ENCODE measurements at regions of chr20 and their contacts with region 1.

Region 1: DNA sequence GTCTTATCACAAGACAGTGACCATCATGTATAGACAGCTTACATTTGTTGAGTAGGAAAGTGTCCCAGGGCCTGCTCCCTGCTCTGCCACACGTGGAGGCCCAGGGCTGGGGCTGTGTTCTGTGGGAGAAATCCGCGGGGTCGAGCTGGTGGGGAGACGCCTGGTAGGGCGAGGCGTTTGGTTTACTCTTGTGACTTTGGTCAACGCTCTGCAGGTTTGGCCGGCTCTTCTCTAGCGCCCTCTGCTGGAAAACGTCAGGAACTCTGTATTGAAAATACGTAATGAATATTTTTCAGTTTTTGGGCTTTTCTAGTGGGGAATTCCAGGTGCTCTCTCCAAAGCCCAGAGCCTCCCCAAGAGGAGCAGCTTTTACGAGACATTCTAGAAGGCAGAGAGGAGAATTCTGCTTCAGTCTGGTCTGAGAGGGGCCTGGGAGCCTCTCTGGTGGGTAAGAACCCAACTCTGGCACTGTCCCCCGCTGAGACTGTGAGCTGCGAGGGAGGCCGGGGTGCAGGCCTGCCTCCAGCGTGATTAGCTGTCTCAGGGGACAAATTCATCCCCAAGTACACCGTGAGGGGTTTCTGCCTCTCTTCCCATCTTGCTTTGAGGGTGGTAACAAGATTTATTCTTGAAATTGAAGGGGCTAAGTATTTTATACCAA is 112.6 kb upstream of the RALGAPA2 start:
- DNase-seq: peak; percentile 49 to 53
- ATAC-seq: peak; percentile 35 to 80; a peak in 3 of 6 replicates
- H3K4me3 ChIP-seq: no peak overlapping the region
- H3K27ac ChIP-seq: no peak overlapping the region
- H3K4me1 ChIP-seq: no peaks in the 10 kb centered on the region
- CTCF ChIP-seq: peak; percentile 76
- EP300 ChIP-seq: no peak
- POLR2A ChIP-seq: no peak
- RAD21 ChIP-seq: peak; percentile 67

Region 2: GRCh38 chr20:20435453-20435852 is 389.6 kb before region 1 on chr20:
- CTCF ChIA-PET with region 1: no interaction called
- POLR2A ChIA-PET with region 1: no interaction called
- DNase-seq: no peak
- ATAC-seq: peak in 1 of 2 experiments; percentile 56; a peak in 2 of 6 replicates
- H3K4me3 ChIP-seq: no peak overlapping the region
- H3K27ac ChIP-seq: no peak overlapping the region
- H3K4me1 ChIP-seq: no peaks in the 10 kb centered on the region
- CTCF ChIP-seq: no peak
- EP300 ChIP-seq: no peak
- POLR2A ChIP-seq: no peak
- RAD21 ChIP-seq: no peak

Region 3: DNA sequence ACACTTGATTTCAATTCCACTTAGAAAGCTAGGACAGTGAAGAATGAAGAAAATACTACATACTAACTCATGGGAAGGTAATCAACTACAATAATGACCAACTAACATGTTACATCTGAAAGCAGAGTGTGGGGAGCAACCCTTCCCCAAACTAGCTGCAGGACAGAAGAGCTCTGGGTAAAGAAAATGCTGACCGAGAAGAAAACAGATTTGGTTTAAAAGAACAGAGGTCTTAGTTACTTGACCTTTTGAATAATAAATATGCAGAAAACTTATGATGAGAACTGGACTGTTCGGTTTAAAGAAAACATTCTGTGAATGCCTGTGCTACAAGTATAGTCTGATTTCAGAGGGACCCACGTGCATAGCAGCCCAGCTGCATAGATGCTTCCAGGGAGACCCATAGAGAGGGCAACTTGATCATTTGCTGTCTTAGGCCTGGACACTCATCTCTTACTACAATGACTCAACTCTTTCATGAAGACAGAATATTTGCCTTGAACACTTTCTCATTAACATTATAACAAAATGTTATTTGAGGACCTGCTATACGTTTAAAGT is 166.1 kb before region 1 on chr20:
- CTCF ChIA-PET with region 1: interaction called, 39 read pairs
- POLR2A ChIA-PET with region 1: no interaction called
- DNase-seq: no peak
- ATAC-seq: no peak
- H3K4me3 ChIP-seq: no peak overlapping the region
- H3K27ac ChIP-seq: no peak overlapping the region
- H3K4me1 ChIP-seq: no peaks in the 10 kb centered on the region
- CTCF ChIP-seq: no peak
- EP300 ChIP-seq: no peak
- POLR2A ChIP-seq: no peak
- RAD21 ChIP-seq: no peak

Region 4: GRCh38 chr20:20791664-20792568 is 33.1 kb before region 1 on chr20:
- CTCF ChIA-PET with region 1: interaction called, 11 read pairs
- POLR2A ChIA-PET with region 1: no interaction called
- DNase-seq: no peak
- ATAC-seq: no peak
- H3K4me3 ChIP-seq: no peak overlapping the region
- H3K27ac ChIP-seq: no peak overlapping the region
- H3K4me1 ChIP-seq: no peaks in the 10 kb centered on the region
- CTCF ChIP-seq: no peak
- EP300 ChIP-seq: no peak
- POLR2A ChIP-seq: no peak
- RAD21 ChIP-seq: no peak

Region 5: GRCh38 chr20:20814685-20815084 is 10.4 kb before region 1 on chr20:
- CTCF ChIA-PET with region 1: interaction called, 19 read pairs
- POLR2A ChIA-PET with region 1: no interaction called
- DNase-seq: peak in 1 of 2 experiments; percentile 12
- ATAC-seq: no peak
- H3K4me3 ChIP-seq: no peak overlapping the region
- H3K27ac ChIP-seq: no peak overlapping the region
- H3K4me1 ChIP-seq: no peaks in the 10 kb centered on the region
- CTCF ChIP-seq: no peak
- EP300 ChIP-seq: no peak
- POLR2A ChIP-seq: no peak
- RAD21 ChIP-seq: no peak

Region 6: GRCh38 chr20:20843982-20844381 is 18.9 kb after region 1 on chr20:
- CTCF ChIA-PET with region 1: interaction called, 105 read pairs
- POLR2A ChIA-PET with region 1: no interaction called
- DNase-seq: no peak
- ATAC-seq: peak in 1 of 2 experiments; percentile 53; a peak in 2 of 6 replicates
- H3K4me3 ChIP-seq: no peak overlapping the region
- H3K27ac ChIP-seq: no peak overlapping the region
- H3K4me1 ChIP-seq: no peaks in the 10 kb centered on the region
- CTCF ChIP-seq: no peak
- EP300 ChIP-seq: no peak
- POLR2A ChIP-seq: no peak
- RAD21 ChIP-seq: no peak